Motor neuron (in vitro differentiated cells): ENCODE measurements at regions of chr6 and their contacts with region 1.

Region 1: DNA sequence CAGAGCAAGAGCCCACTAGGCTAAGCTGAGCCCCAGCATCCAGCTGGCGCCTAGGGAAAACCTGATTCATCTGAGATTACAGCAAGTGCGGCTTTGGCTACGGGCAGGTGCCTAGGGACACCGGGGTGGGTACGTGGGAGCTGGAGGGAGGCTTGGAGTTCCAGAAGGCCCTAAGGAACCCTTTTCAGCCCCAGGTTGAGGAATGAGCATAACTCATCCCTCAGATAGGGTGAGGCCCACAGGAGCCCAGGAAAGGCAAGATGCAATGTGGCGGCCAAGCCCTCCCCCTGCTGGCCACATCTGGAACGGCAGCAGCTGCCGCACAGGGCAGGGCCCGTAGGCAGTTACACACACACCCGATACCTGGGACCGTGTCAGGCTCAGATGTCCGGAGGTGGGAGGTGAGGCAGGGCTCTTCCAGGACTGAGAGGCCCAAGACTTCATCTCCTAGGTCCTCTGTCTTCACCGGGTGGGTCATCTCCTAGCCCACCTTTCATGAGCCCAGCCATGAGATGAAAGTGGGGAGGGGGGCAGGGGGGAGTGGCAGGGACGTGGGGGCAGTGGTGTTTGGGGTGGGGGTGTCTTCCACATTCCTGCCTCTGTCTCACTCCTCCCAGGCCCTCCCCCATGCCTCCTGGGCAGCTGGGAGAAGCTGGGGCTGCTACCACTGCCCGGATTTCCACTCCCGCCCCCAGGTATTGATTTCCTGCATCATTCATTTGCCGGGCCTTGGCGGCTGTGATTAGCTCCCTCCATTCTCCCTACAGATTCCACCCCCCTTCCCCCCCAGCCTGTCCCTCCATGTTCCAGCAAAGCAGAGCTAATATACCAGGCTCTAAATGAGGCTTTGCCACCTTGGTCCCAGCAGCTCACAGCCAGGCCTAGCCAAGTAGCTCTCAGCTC is 5.5 kb downstream of the MDGA1 start:
- ATAC-seq: peak; percentile 75 to 90 (median 86)
- H3K4me3 ChIP-seq: peak overlapping the region in 2 of 5 donors; percentile 4
- H3K27ac ChIP-seq: peak overlapping the region; percentile 69 to 70
- H3K4me1 ChIP-seq: peaks cover 41 to 43% of the 10 kb centered on the region in 2 donors

Region 2: DNA sequence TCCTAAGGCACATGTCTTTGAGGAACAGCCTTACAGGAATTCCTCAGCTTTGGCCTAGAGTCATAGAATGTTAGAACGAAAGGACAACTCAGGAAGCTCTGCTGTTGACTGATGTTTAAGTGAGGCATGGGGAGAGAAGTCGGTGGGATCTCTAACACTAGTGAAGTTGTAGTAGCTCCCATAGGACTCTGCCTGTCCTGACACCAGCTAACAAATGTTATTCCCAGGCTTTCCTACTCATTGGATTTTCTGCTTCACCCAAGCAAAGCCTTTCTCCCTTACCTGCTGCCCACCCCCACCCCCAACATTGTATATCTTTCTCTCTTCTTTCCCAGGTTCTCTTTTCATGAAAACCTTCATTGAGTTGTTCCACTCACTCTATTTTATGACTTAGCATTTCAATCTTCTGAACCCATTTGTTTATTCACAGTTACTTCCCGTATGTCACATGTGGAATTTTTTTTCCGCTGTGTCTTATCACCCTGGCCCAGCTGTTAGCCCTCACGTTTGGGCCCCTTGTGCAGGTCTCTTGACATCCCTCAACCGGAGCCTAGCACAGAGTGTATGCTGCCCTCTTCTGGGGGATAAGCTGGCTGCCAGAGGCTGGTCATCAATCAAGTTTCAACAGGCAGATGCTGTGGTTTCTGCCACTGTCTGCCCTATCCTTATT is 377.5 kb before region 1 on chr6:
- in situ Hi-C with region 1: no loop called
- ATAC-seq: peak in 4 of 8 experiments; percentile 46 to 69 (median 56)
- H3K4me3 ChIP-seq: no peak overlapping the region
- H3K27ac ChIP-seq: no peak overlapping the region
- H3K4me1 ChIP-seq: no peaks in the 10 kb centered on the region

Region 3: GRCh38 chr6:37353761-37354525 is 338.2 kb before region 1 on chr6 and contains the start of gene RNF8:
- in situ Hi-C with region 1: loop called in 1 of 9 experiments (anchors 25 kb)
- ATAC-seq: peak; percentile 84 to 98 (median 96)
- H3K4me3 ChIP-seq: peak within 1 kb of the TSS; percentile 75 to 99 (median 88)
- H3K27ac ChIP-seq: peak within 1 kb of the TSS; percentile 30 to 63
- H3K4me1 ChIP-seq: peaks cover 6 to 7% of the 10 kb centered on the region in 2 donors
- total RNA-seq, gene RNF8: 19.0 to 53.9 (median 22.9) TPM

Region 4: GRCh38 chr6:37473397-37474095 is 218.6 kb before region 1 on chr6:
- in situ Hi-C with region 1: loop called in 5 of 9 experiments (anchors 25 kb)
- ATAC-seq: peak in 2 of 8 experiments; percentile 78
- H3K4me3 ChIP-seq: no peak overlapping the region
- H3K27ac ChIP-seq: no peak overlapping the region
- H3K4me1 ChIP-seq: peaks cover 14 to 21% of the 10 kb centered on the region in 2 donors

Region 5: GRCh38 chr6:37499433-37500293 is 192.5 kb before region 1 on chr6 and contains the start of gene CCDC167:
- in situ Hi-C with region 1: loop called in 4 of 9 experiments (anchors 25 kb)
- ATAC-seq: peak; percentile 92 to 97 (median 94)
- H3K4me3 ChIP-seq: peak within 1 kb of the TSS; percentile 41 to 63 (median 51)
- H3K27ac ChIP-seq: peak within 1 kb of the TSS; percentile 39 to 68
- H3K4me1 ChIP-seq: peaks cover 3 to 11% of the 10 kb centered on the region in 2 donors
- total RNA-seq, gene CCDC167: 28.1 to 119 (median 89.7) TPM

Region 6: GRCh38 chr6:38493931-38494547 is 801.9 kb after region 1 on chr6:
- in situ Hi-C with region 1: loop called in 1 of 9 experiments (anchors 10 kb)
- ATAC-seq: peak; percentile 38 to 60 (median 44)
- H3K4me3 ChIP-seq: no peak overlapping the region
- H3K27ac ChIP-seq: no peak overlapping the region
- H3K4me1 ChIP-seq: peaks cover 16 to 22% of the 10 kb centered on the region in 2 donors